Calu3 (cell line): ENCODE measurements at regions of chr1 and their contacts with region 1.

Region 1: GRCh38 chr1:152459596-152460528 is 45.8 kb upstream of the CRNN start:
- DNase-seq: peak; percentile 85
- H3K4me3 Mint-ChIP-seq: no peak overlapping the region
- H3K27ac Mint-ChIP-seq: no peak overlapping the region
- H3K4me1 Mint-ChIP-seq: no peaks in the 10 kb centered on the region
- H3K27me3 Mint-ChIP-seq: peaks cover 43% of the 10 kb centered on the region
- CTCF ChIP-seq: peak; percentile 85

Region 2: DNA sequence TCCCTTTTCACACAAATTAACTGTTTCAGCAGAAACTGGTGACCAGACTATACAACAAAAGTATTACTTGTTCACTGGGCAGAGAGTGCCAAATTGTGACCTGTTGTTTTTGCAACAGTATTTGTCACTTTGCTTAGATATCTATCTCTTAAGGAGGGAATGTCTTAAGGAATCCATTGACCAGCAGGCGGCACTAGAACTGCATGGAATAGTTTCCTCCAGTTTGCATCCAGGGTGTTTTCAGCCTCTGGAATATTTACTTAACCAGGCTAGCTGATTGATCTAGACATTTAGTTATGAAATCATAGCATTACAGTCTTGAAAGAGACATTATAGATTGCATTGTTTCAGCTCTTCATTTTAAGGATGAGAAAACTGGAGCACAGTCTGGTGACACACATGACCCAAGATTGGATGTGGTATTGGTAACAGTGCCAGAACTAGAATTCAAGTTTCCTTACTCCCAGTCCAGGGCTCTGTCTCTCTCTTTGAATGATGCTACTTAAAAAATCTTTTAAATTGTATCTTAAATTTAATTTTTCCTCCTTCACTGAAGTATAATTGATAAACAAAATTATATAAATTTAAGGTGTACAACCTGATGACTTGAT is 317.8 kb before region 1 on chr1:
- CTCF ChIA-PET with region 1: interaction called, 6 read pairs
- intact Hi-C with region 1: loop called (anchors 1 kb)
- DNase-seq: peak; percentile 69
- H3K4me3 Mint-ChIP-seq: no peak overlapping the region
- H3K27ac Mint-ChIP-seq: no peak overlapping the region
- H3K4me1 Mint-ChIP-seq: no peaks in the 10 kb centered on the region
- H3K27me3 Mint-ChIP-seq: peaks cover 78% of the 10 kb centered on the region
- CTCF ChIP-seq: peak; percentile 80

Region 3: GRCh38 chr1:152347116-152347728 is 112.6 kb before region 1 on chr1:
- CTCF ChIA-PET with region 1: interaction called, 11 read pairs
- intact Hi-C with region 1: no loop called
- DNase-seq: peak; percentile 75
- H3K4me3 Mint-ChIP-seq: no peak overlapping the region
- H3K27ac Mint-ChIP-seq: no peak overlapping the region
- H3K4me1 Mint-ChIP-seq: no peaks in the 10 kb centered on the region
- H3K27me3 Mint-ChIP-seq: peaks cover 39% of the 10 kb centered on the region
- CTCF ChIP-seq: peak; percentile 83

Region 4: DNA sequence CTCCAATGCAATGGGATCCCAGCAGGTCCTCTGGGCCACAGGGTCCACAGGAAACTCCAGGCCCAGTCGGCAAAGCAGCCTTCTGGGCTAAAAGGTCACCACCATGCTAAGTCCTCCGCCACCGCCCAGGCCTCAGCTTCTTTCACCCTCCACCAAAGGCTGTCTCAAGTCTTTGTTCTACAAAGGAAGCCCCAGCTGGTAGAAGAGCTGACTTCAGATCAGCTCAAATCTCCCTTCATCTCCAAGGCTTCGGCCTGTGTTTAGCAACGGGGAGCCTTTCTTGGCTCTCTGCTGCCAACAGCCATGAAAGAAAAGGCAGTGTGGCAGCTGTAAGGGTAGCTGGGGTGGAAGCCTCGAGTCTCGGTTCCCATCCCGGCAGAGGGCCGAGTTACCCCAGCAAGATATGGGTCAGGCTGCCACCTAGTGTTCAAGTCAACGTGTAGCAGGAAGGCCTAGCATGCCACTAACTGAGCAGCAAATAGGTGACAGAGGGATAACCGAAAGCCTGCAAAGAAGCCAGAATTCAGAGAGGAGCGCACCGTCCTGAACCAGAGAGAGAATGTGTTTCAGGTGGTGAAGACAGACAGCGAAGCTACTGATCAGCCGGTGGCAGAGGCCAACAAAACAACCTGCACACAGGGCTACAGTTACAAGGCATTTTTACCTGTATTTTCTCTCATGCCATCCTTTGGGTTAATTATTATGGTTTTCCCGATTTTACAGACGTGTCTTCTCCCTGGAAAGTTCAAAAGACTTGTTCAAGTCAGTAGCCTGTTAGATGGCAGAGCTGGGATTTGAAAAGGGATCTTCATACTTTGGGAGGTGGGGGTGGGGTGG is 19.0 kb before region 1 on chr1:
- CTCF ChIA-PET with region 1: interaction called, 18 read pairs
- intact Hi-C with region 1: no loop called
- DNase-seq: peak; percentile 84
- H3K4me3 Mint-ChIP-seq: no peak overlapping the region
- H3K27ac Mint-ChIP-seq: no peak overlapping the region
- H3K4me1 Mint-ChIP-seq: no peaks in the 10 kb centered on the region
- H3K27me3 Mint-ChIP-seq: peaks cover 91% of the 10 kb centered on the region
- CTCF ChIP-seq: peak; percentile 92

Region 5: DNA sequence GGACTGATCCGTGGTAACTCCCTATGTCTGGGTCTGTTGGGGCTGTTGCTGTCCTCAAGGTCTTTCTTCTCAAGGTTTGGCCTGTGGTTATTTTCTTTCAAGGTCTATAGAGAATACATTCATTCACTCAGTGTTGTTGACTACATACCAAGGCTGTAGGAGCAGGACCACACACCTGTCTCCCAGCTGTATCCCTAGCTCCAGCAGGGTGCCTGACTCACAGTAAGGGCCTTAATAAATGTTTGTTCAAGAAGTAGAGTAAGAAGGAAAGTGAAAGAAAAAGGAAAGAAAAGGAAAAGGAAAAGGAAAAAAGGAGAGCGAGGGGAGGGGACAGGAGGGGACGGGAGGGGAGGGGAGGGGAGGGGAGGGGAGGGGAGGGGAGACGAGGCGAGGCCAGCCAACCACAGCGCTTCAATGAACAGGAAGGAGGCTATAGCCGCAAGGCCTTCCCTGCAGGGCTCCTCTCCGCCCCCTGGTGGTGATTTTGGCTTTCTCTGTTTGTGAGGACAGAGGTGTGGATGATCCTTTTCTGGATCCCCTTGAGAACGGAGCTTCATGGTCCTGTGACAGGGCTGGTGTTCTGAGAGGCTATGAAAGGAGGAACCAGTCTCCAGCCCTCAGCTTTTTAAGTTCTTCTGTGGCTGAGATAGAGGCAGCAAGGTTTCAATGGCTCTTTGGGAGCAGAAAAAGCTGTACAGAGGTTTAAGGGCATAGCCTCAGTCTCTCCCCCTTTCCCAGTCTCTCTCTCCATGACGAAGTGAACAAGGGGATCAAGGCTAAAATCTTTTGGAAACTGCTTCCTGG is 20.1 kb after region 1 on chr1:
- CTCF ChIA-PET with region 1: interaction called, 17 read pairs
- intact Hi-C with region 1: no loop called
- DNase-seq: peak; percentile 87
- H3K4me3 Mint-ChIP-seq: no peak overlapping the region
- H3K27ac Mint-ChIP-seq: no peak overlapping the region
- H3K4me1 Mint-ChIP-seq: no peaks in the 10 kb centered on the region
- H3K27me3 Mint-ChIP-seq: peaks cover 46% of the 10 kb centered on the region
- CTCF ChIP-seq: peak; percentile 48